AG04450 (cell line): ENCODE measurements at regions of chr12 and their contacts with region 1.

Region 1: GRCh38 chr12:1939801-1940607 is 21.6 kb upstream of the CACNA2D4 start:
- DNase-seq: peak; percentile 68
- H3K4me3 ChIP-seq: no peak overlapping the region
- H3K27ac ChIP-seq: no peak overlapping the region
- H3K27me3 ChIP-seq: no peaks in the 10 kb centered on the region
- CTCF ChIP-seq: peak; percentile 93

Region 2: DNA sequence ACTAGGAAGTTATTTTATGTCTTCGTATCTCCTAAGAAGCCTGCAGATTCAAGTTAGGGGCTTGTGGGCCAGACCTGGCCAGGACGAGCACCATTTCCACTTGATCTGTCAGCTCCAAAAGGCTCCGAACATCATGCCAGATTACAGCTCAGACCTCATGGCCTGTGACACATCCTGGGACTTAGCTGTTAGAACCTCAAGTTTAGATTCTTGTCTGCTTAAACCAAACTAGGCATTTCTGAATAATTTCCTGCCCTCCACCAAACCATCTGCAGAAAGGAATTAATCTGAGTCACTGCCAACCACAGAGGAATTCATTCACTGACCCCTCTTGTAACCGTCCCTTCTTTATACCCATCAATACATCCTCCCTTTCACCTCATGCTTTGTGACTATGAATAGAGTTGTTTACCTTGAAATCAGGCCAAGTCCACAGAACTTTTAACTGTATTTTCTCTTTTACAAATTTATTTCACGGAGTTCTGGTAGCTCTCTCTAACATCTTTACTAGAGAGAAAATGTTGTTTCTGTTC is 465.9 kb before region 1 on chr12:
- CTCF ChIA-PET with region 1: no interaction called
- POLR2A ChIA-PET with region 1: no interaction called
- DNase-seq: peak; percentile 92
- H3K4me3 ChIP-seq: peak overlapping the region; percentile 44
- H3K27ac ChIP-seq: peak overlapping the region; percentile 98
- H3K27me3 ChIP-seq: no peaks in the 10 kb centered on the region
- CTCF ChIP-seq: no peak

Region 3: DNA sequence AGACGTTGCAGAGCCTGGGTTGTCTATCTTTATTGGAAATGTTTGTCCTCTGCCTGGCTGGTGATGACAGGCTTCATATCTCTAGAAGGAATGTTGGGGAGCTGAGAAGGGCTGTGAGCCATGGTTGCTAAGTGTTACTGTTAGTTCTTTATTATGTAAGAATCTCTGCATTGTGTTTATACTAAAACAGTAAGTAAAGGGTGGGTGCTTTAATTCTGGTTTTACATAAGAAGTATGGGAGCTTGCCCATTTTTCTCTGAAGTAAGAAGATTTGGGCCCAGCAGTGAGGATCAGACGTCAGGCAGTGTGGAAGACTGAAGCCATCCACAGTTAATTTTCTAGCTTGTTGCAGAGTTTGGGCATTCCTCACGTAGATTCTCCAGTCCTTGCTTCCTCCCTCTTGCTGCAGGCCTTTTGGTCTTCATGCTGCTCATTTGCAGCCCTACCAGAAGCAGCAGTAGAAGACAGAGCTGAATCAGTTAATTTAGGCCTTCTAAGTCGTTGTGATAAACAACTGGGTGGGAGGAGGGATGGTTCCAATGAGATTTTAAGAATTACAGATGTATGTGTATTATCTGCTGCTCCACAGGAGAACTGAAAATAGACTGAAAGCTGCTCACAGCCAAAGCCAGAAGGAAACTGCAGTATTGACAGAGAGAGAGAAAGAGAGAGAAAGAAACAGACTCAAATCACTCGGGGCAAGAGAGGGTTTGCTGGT is 289.6 kb before region 1 on chr12:
- CTCF ChIA-PET with region 1: interaction called, 49 read pairs
- POLR2A ChIA-PET with region 1: no interaction called
- DNase-seq: no peak
- H3K4me3 ChIP-seq: no peak overlapping the region
- H3K27ac ChIP-seq: no peak overlapping the region
- H3K27me3 ChIP-seq: no peaks in the 10 kb centered on the region
- CTCF ChIP-seq: no peak

Region 4: DNA sequence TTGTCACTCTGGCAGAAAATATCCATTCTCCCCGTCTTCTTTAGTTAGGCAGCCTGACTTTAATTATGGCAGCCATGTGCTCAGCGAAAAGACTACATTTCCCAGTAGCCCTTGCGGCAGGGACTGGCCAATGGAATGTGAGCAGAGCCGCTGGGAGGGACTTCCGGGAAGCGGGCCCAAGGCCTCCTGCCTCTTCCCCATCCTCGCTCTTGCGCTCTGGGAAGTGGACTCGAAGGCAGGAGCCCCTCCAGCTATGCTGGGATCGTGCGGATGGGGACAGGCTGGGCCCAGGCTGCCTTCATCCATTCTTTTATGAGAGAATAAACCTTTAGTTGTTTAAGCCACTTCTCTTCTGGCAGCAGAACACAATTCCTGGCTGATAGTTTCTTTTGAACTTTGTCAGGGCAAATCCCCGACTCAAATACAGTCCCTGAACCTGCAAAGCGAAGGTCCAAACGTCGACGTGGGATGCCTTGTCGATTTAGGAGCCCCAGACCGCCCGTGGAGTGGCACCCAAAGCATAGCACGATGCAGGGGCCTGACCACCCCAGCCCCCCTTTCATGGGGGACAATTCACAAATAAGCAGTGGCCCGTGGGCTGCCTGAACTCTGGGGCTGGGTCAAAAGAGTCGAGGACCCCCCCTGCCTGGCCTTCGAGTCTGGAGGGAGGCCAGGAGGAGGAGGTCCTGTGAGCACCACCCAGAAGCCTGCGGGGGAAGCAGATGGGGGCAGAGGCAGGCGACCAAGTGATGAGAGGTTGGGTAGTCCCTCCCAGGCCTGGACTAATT is 135.3 kb before region 1 on chr12:
- CTCF ChIA-PET with region 1: interaction called, 70 read pairs
- POLR2A ChIA-PET with region 1: no interaction called
- DNase-seq: peak; percentile 72
- H3K4me3 ChIP-seq: no peak overlapping the region
- H3K27ac ChIP-seq: no peak overlapping the region
- H3K27me3 ChIP-seq: no peaks in the 10 kb centered on the region
- CTCF ChIP-seq: no peak

Region 5: GRCh38 chr12:1927751-1928351 is 12.2 kb before region 1 on chr12:
- CTCF ChIA-PET with region 1: interaction called, 10 read pairs
- POLR2A ChIA-PET with region 1: no interaction called
- DNase-seq: no peak
- H3K4me3 ChIP-seq: no peak overlapping the region
- H3K27ac ChIP-seq: no peak overlapping the region
- H3K27me3 ChIP-seq: peaks cover 50% of the 10 kb centered on the region
- CTCF ChIP-seq: no peak

Region 6: DNA sequence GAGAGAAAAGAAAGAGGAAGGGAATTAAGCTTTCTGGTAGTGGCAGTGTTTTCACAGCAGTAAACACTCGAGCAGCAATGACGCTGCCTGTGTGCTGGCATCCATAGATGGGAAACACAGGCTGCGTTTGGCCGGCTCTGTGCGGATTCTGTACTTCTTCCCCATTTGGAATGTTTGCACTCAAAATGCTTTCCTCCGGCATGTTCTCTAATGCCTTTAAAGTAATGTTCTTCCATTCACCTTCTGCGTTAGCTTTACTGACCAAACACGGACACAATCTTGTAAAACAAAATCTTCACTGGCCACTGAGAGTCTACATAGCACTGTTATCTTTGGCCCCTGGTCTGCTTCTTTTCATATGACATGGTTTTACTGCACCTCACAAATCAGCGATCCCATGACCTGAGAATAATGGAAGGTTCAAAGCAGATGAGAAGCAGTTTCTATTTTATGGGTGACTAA is 32.9 kb after region 1 on chr12:
- CTCF ChIA-PET with region 1: interaction called, 36 read pairs
- POLR2A ChIA-PET with region 1: no interaction called
- DNase-seq: peak; percentile 20
- H3K4me3 ChIP-seq: peak overlapping the region; percentile 18
- H3K27ac ChIP-seq: peak overlapping the region; percentile 23
- H3K27me3 ChIP-seq: no peaks in the 10 kb centered on the region
- CTCF ChIP-seq: no peak

Region 7: GRCh38 chr12:2144951-2145350 is 204.9 kb after region 1 on chr12:
- CTCF ChIA-PET with region 1: no interaction called
- POLR2A ChIA-PET with region 1: no interaction called
- DNase-seq: no peak
- H3K4me3 ChIP-seq: no peak overlapping the region
- H3K27ac ChIP-seq: no peak overlapping the region
- H3K27me3 ChIP-seq: no peaks in the 10 kb centered on the region
- CTCF ChIP-seq: no peak

Region 8: GRCh38 chr12:2168808-2169207 is 228.8 kb after region 1 on chr12:
- CTCF ChIA-PET with region 1: no interaction called
- POLR2A ChIA-PET with region 1: no interaction called
- DNase-seq: no peak
- H3K4me3 ChIP-seq: no peak overlapping the region
- H3K27ac ChIP-seq: no peak overlapping the region
- H3K27me3 ChIP-seq: no peaks in the 10 kb centered on the region
- CTCF ChIP-seq: no peak